Activated T-helper 1 cell treated with anti-CD3 and anti-CD28 coated beads, Interleukin-12 subunit alpha, Interleukin-12 subunit beta, Interleukin-2, Interleukin-4 antibody, amounts not matched to agents 30 ng/mL and 10 ng/mL and 1 ng/mL, durations not matched to agents 14 hours and 24 hours and 36 hours (primary cell): ENCODE measurements at regions of chr3 and their contacts with region 1.

Region 1: DNA sequence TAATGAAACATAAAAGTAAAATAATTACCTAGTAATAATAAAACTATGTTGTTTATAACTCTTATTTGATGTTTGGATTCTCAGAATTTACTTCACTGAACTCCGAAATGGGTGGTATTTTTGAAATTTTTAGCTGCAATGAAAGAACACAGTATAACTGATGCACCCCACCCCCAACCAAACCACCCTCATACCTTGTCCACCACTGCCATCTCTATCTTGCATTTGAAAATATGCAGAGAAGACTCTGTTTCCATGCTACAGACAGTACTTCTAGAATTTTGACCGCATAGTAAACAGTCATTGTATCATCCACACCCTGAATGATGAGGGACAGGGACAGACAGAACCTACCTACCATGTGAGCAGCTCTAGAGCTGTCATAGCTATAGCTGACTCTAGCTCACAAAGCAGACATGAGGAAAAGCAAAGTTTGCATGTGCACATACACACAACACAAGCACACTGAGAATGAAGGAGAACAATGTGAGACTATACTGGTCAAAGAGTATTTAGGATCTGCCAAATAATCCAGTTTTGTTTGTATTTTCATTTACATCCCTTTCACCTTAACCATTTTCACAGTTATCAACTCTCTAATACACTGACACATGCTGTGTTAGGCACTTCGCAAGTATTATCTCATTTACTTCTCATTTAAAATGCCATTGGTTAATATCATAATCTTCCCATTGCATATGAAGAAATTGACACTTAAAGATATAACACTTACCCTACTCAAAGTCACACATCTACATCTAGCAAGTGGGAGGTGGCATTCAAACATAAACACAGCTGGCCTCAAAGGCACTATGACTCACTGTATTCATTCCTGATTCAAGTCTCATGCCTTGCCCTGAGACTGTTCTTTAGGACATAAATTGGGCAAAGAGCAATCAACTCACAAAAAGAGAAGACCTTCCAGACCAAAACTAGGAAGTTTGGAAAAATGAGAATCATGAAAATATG is 1014.7 kb upstream of the CFAP20DC start:
- DNase-seq: no peak
- H3K4me3 Mint-ChIP-seq: peak overlapping the region; percentile 53
- H3K27ac Mint-ChIP-seq: peak overlapping the region; percentile 86
- H3K4me1 Mint-ChIP-seq: peaks cover 79% of the 10 kb centered on the region
- H3K27me3 Mint-ChIP-seq: no peaks in the 10 kb centered on the region

Region 2: GRCh38 chr3:60048447-60048848 is 16.0 kb before region 1 on chr3:
- intact Hi-C with region 1: loop called (anchors 1 kb)
- DNase-seq: peak; percentile 62
- H3K4me3 Mint-ChIP-seq: peak overlapping the region; percentile 74
- H3K27ac Mint-ChIP-seq: peak overlapping the region; percentile 93
- H3K4me1 Mint-ChIP-seq: peaks cover 88% of the 10 kb centered on the region
- H3K27me3 Mint-ChIP-seq: no peaks in the 10 kb centered on the region

Region 3: DNA sequence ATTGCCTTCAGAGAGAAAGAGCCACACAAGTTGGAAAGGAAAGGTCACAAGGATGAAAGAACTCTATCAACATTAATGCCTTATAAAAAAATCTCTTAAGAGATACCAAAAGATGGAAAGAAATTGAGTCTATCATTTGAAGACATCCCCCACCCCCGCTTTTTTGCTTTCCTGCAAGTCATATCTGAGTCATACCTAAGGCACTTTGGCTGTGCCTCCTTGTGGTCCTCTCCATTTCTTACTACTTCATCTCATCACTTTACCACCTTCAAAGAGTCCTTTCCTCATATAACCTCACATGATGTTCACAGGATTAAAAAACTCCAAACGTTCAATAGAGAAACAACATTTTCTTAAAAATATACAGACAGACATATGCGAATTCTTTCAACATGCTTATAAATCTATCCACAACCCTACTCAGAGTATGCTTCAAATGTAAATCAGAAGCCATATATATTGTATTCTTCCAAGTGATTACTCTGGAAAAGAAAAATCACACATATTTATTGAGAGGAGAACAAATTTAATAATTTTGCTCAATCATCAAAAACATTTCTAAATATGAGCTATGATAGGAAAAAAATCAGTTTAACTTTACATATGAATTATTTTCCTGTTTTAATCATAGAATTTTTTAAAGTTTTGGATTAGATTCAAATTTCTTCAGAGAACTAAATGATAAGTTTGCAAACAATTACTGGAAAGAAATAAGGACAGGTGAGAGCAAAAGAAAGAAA is 10.8 kb before region 1 on chr3:
- intact Hi-C with region 1: loop called (anchors 1 kb)
- DNase-seq: no peak
- H3K4me3 Mint-ChIP-seq: peak overlapping the region; percentile 21
- H3K27ac Mint-ChIP-seq: peak overlapping the region; percentile 75
- H3K4me1 Mint-ChIP-seq: peaks cover 86% of the 10 kb centered on the region
- H3K27me3 Mint-ChIP-seq: no peaks in the 10 kb centered on the region

Region 4: GRCh38 chr3:60169755-60170154 is 105.3 kb after region 1 on chr3:
- intact Hi-C with region 1: no loop called
- DNase-seq: no peak
- H3K4me3 Mint-ChIP-seq: no peak overlapping the region
- H3K27ac Mint-ChIP-seq: no peak overlapping the region
- H3K4me1 Mint-ChIP-seq: peaks cover 10% of the 10 kb centered on the region
- H3K27me3 Mint-ChIP-seq: no peaks in the 10 kb centered on the region